ENCODE measurements at regions of chr6 and their contacts with region 1.

Region 1: DNA sequence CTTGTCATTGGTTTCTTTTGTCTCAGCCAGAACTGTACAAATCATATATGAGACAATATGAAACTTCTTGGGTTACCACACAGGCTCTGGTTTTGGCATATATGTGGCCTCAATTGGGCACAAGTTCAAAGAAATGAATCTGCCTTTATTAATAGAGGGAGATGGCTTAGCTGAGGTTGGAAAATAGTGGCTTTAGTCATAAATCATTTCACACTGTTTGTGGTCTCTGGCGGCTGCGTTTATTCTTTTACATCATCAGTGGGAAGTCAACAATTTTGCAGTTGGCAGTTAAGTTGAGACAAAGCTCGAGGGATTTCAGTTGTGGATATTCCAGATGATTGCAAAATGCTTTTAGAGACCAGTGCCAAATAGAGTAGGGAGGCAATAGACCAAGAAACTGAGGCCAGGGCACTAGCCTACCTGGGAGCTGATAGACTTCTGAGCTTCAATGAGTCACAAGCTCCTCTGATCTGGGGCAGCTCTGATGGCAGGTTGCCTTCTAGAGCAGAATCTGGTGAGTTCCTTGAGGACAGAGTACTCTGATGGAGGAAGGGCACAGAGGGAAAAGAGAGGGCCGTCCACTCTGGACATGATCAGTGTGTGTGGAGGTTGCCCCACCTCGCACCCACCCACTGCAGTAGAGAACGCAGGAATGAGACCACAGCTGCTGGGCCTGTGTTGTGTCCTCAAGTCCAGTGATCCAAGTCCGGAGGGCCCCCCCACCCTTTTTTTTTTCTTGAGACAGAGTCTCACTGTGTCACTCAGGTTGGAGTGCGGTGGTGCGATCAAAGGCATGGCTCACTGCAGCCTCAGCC is 73.5 kb downstream of the ARMC2 start:
- DNase-seq: peak; percentile 68
- H3K4me3 Mint-ChIP-seq: no peak overlapping the region
- H3K27ac Mint-ChIP-seq: peak overlapping the region; percentile 18
- H3K4me1 Mint-ChIP-seq: peaks cover 24% of the 10 kb centered on the region
- H3K27me3 Mint-ChIP-seq: peaks cover 40% of the 10 kb centered on the region

Region 2: DNA sequence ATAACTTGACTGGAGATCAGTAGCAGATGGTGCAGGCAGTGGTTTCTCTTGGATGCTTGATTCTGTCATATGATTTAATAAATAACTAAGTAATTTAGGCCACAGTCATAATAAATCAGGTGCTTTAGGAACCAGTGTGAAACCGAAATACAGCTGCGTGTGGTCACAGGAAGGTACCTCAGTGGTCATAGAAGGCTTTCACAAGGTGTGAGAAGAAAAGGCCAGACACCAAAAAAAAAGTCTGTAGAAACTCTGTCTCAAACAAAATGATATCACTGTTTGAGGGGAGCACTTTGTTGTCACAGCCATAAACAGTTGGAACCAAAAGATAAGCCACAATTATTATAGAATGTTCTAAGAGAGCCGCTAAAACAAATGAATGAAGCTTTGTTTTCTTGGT is 17.0 kb before region 1 on chr6:
- intact Hi-C with region 1: no loop called
- DNase-seq: no peak
- H3K4me3 Mint-ChIP-seq: no peak overlapping the region
- H3K27ac Mint-ChIP-seq: no peak overlapping the region
- H3K4me1 Mint-ChIP-seq: peaks cover 26% of the 10 kb centered on the region
- H3K27me3 Mint-ChIP-seq: peaks cover 13% of the 10 kb centered on the region

Region 3: DNA sequence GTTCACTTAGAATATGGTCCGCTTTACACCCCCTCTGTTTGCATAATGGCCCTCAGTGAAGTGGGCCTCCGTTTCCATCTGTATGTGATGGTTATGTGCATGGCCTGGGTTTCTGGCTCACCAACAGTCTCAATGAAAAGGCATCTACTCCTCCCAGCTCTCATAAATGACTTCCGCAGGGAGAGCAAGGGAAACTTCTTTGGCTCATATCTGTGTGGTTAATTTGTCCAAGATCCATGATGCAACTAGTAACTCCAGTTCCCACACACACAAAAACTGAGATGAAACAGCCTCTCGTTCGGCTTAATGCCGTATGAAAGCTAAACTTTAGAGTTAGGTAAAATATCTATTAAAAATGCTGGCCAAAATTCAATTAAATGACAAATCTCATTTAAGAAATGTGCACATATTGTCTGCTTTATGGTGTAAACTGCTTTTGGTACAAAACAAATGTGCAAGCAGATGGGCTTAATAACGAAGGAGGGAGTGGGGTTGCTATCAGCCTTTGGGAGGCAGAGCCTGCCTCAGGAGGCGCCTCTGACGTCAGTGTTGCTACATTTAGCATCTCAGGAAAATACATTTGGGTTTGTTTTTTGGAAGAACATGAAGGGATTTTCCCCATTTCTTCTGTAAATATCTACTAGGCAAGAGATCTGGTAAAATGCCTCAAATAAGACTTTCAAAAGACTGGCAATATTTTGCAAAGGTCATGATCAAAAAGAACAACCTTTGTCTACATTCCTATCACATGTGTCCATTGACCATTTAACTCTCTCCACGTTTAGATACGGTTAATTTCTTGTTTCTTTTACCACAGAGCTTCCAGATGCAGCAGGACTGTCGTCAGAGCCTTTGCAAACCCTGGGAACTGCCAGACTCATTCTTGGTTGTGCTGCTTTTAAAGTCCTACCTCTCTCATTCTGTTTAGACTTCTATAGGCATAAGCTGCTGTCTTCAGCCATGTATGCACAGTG is 23.2 kb after region 1 on chr6:
- intact Hi-C with region 1: loop called (anchors 2 kb)
- DNase-seq: no peak
- H3K4me3 Mint-ChIP-seq: peak overlapping the region; percentile 27
- H3K27ac Mint-ChIP-seq: peak overlapping the region; percentile 34
- H3K4me1 Mint-ChIP-seq: peaks cover 57% of the 10 kb centered on the region
- H3K27me3 Mint-ChIP-seq: no peaks in the 10 kb centered on the region

Measured in activated CD4-positive, alpha-beta T cell treated with anti-CD3 and anti-CD28 coated beads, Interleukin-2, amount 10 ng/mL, durations not matched to agents 24 days and 14 days (primary cell).